Spleen (tissue), 13 donors: ENCODE measurements at regions of chr1 and their contacts with region 1.

Region 1: DNA sequence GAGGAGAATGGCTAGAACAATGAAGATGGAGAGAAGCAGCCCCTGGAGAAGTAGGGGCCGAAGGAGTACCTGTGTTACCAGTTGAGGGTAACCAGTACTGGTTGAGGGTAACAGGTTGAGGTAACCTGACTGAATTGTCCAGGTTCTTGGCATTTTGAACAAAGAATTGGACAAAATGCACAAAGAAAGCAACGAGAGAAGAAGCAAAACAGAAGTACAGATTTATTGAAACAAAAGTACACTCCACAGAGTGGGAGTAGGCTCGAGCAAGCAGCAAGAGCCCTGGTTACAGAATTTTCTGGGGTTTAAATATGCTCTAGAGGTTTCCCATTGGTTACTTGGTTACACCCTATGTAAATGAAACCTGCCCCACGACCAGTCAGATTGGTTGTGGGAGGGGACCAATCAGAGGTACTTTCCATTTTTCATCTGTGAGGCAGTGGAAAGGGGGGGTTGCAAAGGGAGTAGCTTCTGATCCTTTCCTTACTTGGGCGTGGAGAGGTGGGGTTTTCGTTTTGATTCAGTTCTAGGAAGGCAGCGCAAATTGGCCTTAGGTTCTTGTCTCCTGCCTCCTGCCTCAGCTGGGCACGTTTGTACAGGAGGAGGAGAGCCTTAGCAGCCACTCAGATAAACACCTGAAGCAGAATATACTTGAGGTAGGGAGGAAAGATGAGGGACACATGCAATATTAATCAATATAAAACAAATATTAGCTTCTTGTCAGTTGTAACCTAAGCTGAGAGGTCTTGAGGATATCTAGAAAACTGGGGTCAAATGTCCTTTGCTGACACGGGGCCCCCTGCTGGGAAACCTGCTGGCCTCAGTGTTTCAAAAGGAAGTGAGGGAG is 14.2 kb upstream of the LSM10 start:
- DNase-seq: no peak
- H3K4me3 ChIP-seq: no peak overlapping the region
- H3K27ac ChIP-seq: peak overlapping the region in 2 of 8 donors; percentile 10 to 40
- H3K4me1 ChIP-seq: peaks cover 0 to 11% (median 1%) of the 10 kb centered on the region in 6 donors
- H3K27me3 ChIP-seq: no peaks in the 10 kb centered on the region
- CTCF ChIP-seq: no peak
- POLR2A ChIP-seq: no peak

Region 2: DNA sequence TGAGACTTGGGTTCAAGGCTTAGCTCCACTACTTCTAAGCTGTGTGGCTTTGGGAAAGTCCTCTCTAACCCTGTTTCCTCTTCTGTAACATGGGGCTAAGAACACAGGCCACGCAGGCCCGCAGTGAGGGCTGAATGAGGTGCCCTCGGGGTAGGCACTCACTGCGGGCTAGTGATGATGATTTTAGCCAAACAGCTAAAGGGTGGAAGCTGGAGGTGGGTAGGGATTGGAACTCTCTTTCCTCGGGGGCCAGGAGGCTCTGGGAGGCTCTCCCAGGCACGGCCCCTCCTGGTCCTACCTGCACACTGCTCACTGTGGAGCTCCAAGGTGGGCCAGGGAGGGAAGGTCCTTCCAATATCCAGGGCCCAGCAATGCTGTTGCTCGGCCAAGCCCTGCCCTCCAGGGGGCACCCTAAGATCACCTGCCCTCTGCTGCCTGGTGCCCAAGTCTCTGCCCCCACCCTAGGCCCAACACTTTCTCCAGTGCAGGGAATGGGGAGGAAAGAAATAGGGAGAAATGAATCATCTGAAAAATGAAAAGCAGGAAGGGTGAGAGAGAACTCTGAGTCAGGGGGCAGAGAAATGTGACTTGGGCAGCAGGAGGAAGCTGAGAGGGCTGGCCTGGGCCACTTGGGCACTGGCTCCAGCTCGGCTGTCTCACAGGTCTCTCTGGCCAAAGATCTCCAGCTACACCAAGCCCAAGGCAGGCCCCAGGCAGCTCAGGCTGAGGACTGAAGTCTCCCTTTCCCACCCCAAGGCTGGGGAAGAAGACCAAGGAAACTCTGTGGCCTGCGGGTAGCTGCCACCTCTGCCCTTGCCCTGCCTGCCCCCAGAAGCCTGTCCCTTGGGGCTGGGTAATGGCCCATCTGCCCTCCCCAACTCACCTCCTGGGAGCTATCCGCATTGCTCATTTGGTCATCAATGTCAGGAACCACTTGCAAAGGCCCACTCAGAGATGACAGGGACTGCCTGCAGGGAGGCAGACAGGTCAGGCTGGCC is 69.1 kb before region 1 on chr1:
- intact Hi-C with region 1: loop called (anchors 10 kb)
- DNase-seq: peak; percentile 89
- H3K4me3 ChIP-seq: peak overlapping the region in 1 of 8 donors; percentile 5
- H3K27ac ChIP-seq: peak overlapping the region in 7 of 8 donors; percentile 46 to 67 (median 54)
- H3K4me1 ChIP-seq: peaks cover 29 to 75% (median 58%) of the 10 kb centered on the region in 6 donors
- H3K27me3 ChIP-seq: no peaks in the 10 kb centered on the region
- CTCF ChIP-seq: peak; percentile 45 to 86 (median 79)
- POLR2A ChIP-seq: no peak

Region 3: DNA sequence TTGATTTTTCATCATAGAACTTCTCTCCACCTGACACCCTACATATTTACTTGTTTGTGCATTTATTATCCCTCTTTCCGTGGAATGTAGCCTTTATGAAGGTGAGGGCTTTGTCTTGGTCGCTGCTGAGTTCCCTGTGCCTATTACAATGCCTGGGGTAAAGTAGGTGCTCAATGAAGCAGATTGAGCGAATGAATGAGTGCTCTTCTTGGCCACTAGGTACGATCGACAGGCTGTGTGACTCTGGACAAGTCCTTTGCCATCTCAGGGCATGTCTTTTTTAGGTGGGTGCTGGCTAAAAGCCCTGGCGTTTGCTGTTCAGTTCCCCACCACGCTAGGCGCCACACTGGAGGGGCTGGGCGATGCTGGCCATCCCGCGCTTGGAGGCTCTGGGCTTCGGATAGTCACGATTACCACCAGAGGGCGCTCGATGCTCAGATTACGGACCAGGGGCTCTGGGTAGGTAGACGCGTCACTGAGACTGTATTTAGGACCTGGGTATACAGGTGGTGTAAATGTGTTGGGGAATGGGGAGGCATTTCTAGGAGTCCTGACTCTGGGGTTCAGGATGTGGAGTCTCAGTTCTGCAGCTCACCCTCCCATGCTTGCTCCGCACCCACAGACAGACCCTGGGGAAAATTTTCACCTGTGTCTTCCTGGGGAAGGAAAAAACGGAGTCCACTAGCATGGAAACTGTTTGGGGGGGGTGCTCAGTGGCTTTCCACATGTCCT is 141.9 kb after region 1 on chr1:
- intact Hi-C with region 1: no loop called
- DNase-seq: peak; percentile 89
- H3K4me3 ChIP-seq: no peak overlapping the region
- H3K27ac ChIP-seq: no peak overlapping the region
- H3K4me1 ChIP-seq: no peaks in the 10 kb centered on the region
- H3K27me3 ChIP-seq: peaks cover 0 to 52% (median 20%) of the 10 kb centered on the region in 7 donors
- CTCF ChIP-seq: peak; percentile 19 to 84 (median 56)
- POLR2A ChIP-seq: no peak